IMR-90 (cell line): ENCODE measurements at regions of chr6 and their contacts with region 1.

Region 1: DNA sequence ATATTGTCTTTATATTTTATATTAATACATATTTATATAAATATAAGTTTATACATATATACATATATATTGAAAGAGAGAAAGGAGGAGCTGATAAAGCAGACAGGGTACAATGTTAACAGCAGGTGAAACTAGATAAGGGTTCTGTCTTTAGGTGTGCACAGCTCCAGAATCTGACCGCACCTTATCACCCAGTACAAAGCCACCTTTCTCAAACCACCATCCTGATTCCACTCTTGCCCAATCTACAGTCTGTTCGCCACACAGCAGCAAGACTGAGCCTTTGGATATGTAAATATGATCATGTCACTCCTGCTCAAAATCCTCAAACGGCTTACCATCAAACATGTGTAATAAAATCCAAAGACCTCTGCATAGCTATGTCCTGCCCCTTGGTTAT is 34.7 kb upstream of the ASCC3 start:
- DNase-seq: no peak
- ATAC-seq: no peak
- H3K4me3 ChIP-seq: no peak overlapping the region
- H3K27ac ChIP-seq: no peak overlapping the region
- H3K4me1 ChIP-seq: no peaks in the 10 kb centered on the region
- H3K27me3 ChIP-seq: no peaks in the 10 kb centered on the region
- CTCF ChIP-seq: no peak
- POLR2A ChIP-seq: no peak
- RAD21 ChIP-seq: no peak

Region 2: GRCh38 chr6:100904316-100904715 is 11.6 kb before region 1 on chr6:
- CTCF ChIA-PET with region 1: no interaction called
- POLR2A ChIA-PET with region 1: interaction called, 25 read pairs
- dilution Hi-C with region 1: no loop called
- in situ Hi-C with region 1: no loop called
- intact Hi-C with region 1: no loop called
- DNase-seq: no peak
- ATAC-seq: no peak
- H3K4me3 ChIP-seq: no peak overlapping the region
- H3K27ac ChIP-seq: no peak overlapping the region
- H3K4me1 ChIP-seq: no peaks in the 10 kb centered on the region
- H3K27me3 ChIP-seq: no peaks in the 10 kb centered on the region; the same call in 1 of the 2 replicates
- CTCF ChIP-seq: no peak
- POLR2A ChIP-seq: no peak
- RAD21 ChIP-seq: no peak